Panc1 (cell line): ENCODE measurements at regions of chr3 and their contacts with region 1.

Region 1: GRCh38 chr3:50088725-50089608 is at the start of gene RBM5:
- DNase-seq: peak; percentile 51
- ATAC-seq: peak; percentile 100
- H3K4me3 ChIP-seq: peak within 1 kb of the TSS; percentile 77 to 92
- H3K27ac ChIP-seq: peak within 1 kb of the TSS; percentile 98
- H3K4me1 ChIP-seq: peaks cover 9% of the 10 kb centered on the region
- H3K27me3 ChIP-seq: no peaks in the 10 kb centered on the region
- CTCF ChIP-seq: no peak
- total RNA-seq, gene RBM5: 86.6 TPM

Region 2: DNA sequence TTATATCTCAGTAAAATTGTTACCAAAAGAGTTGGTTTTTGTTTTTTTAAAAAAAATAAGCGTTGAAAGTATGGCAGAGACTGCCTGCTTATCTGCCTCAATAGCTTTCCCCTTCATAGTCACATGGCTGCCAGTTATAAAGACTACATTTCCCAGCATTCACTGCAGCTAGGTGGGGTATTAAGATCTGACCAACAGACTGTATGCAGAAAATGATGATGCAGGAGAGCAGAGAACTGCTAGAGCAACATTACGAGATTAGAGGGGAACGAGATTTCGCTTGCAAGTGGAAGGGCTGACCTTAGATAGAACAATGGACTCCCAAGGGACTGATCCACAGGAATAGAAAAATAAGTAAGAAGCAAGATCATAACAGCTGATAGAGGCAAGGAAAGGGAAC is 691.5 kb before region 1 on chr3:
- CTCF ChIA-PET with region 1: interaction called, 10 read pairs
- POLR2A ChIA-PET with region 1: no interaction called
- in situ Hi-C with region 1: no loop called
- intact Hi-C with region 1: no loop called
- DNase-seq: no peak
- ATAC-seq: peak; percentile 70
- H3K4me3 ChIP-seq: no peak overlapping the region
- H3K27ac ChIP-seq: no peak overlapping the region
- H3K4me1 ChIP-seq: no peaks in the 10 kb centered on the region
- H3K27me3 ChIP-seq: no peaks in the 10 kb centered on the region
- CTCF ChIP-seq: no peak